Ascending aorta (tissue), 2 donors: ENCODE measurements at regions of chr2 and their contacts with region 1.

Region 1: GRCh38 chr2:236569573-236569973 is at the start of gene ACKR3:
- DNase-seq: peak; percentile 50 to 93
- H3K4me3 ChIP-seq: peak within 1 kb of the TSS; percentile 72 to 74
- H3K27ac ChIP-seq: peak within 1 kb of the TSS; percentile 94 to 97
- H3K4me1 ChIP-seq: peaks cover 4 to 37% of the 10 kb centered on the region in 2 donors
- H3K27me3 ChIP-seq: no peaks in the 10 kb centered on the region
- CTCF ChIP-seq: peak; percentile 22 to 55 (median 44)
- total RNA-seq, gene ACKR3: 75.6 TPM

Region 2: GRCh38 chr2:236512902-236513435 is 56.6 kb before region 1 on chr2:
- intact Hi-C with region 1: loop called (anchors 1 kb)
- DNase-seq: peak in 1 of 2 donors; percentile 84
- H3K4me3 ChIP-seq: no peak overlapping the region
- H3K27ac ChIP-seq: no peak overlapping the region
- H3K4me1 ChIP-seq: no peaks in the 10 kb centered on the region
- H3K27me3 ChIP-seq: no peaks in the 10 kb centered on the region
- CTCF ChIP-seq: peak; percentile 71 to 85 (median 76)

Region 3: DNA sequence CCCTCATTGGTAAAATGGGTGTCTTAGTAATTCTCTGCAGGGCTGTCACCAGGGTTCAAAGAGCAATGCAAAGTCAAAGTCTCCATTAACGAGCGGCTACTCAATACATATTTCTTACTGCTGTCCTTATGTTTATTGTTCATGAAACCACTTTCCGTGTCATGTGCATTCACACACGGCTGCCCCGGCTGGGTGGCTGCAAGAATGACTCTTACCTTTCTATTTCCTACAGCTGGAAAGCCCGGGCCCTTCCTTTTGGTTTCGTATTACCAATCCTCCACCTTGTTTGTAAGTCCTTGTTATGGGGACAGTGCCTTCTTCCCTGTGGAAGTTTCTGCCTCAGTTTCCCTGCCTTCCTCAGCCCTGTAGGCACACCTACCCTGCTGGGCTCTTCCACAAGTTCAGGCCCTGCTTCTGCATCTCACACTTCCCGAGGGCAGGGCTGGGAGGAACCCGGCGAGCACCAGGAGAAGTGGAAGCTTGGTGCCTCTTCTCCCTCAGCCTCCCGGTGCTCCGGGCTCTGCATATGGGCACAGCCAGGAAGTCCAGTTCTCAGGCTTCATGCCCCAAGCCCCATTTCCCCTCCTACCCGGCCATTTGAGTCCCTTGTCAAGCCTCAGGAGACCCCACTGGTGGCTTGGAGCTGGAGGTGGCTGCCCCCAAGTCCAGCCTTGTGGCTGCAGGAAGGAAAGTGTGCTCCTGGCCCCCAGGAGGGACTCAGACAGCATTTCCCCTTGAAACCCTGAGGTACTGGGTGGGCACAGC is 18.7 kb before region 1 on chr2:
- intact Hi-C with region 1: no loop called
- DNase-seq: no peak
- H3K4me3 ChIP-seq: no peak overlapping the region
- H3K27ac ChIP-seq: no peak overlapping the region
- H3K4me1 ChIP-seq: peaks cover 0 to 3% of the 10 kb centered on the region in 2 donors
- H3K27me3 ChIP-seq: no peaks in the 10 kb centered on the region
- CTCF ChIP-seq: no peak

Region 4: GRCh38 chr2:236782938-236783337 is 213.4 kb after region 1 on chr2:
- intact Hi-C with region 1: loop called (anchors 2 kb)
- DNase-seq: no peak
- H3K4me3 ChIP-seq: no peak overlapping the region
- H3K27ac ChIP-seq: no peak overlapping the region
- H3K4me1 ChIP-seq: peaks cover 0 to 15% of the 10 kb centered on the region in 2 donors
- H3K27me3 ChIP-seq: no peaks in the 10 kb centered on the region
- CTCF ChIP-seq: no peak

Region 5: DNA sequence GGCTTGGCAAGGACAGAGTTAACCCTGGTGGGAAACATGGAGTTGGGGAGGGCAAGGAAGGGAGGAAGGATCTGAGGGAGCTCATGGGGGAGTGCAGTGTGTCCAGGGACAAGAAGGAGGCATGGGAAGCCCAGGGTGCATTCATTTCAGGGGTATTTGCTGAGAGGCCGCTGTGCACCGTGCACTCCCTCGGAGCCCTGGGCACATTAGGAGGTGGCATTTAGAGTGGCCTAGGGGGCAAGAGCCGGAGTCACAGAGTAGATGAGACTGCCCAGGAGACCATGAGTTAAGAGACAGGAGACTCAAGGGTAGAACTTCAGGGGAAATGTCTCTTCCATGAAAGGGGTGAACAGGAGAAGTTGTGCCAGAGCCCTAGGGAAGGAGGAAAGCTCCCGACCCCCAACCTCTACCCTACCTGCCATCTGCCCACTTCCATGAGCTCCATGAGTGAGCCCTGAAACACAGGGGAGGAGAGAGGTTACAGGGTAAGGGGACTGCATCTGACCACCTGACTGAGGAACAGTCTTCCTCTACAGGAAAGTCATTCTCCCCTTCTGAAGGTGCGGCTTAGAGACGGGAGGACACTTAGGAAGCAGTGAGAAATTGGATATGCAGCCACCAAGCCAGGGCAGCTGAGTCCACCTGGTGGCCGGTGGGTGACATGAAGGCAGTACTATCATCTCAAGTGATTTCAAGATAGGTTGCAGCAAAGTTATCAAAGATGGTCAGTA is 457.6 kb after region 1 on chr2:
- intact Hi-C with region 1: loop called (anchors 2 kb)
- DNase-seq: peak; percentile 38 to 83
- H3K4me3 ChIP-seq: no peak overlapping the region
- H3K27ac ChIP-seq: no peak overlapping the region
- H3K4me1 ChIP-seq: no peaks in the 10 kb centered on the region
- H3K27me3 ChIP-seq: no peaks in the 10 kb centered on the region
- CTCF ChIP-seq: peak; percentile 71 to 86 (median 80)